ENCODE measurements at regions of chr1 and their contacts with region 1.

Region 1: GRCh38 chr1:184494929-184495328 is 108.1 kb downstream of the C1orf21 start:
- DNase-seq: no peak
- ATAC-seq: no peak
- H3K4me3 ChIP-seq: no peak overlapping the region
- H3K4me3 Mint-ChIP-seq: no peak overlapping the region
- H3K27ac ChIP-seq: no peak overlapping the region
- H3K27ac Mint-ChIP-seq: peak overlapping the region; percentile 98 to 99
- H3K4me1 ChIP-seq: peaks cover 17% of the 10 kb centered on the region
- H3K4me1 Mint-ChIP-seq: peaks cover 59 to 60% of the 10 kb centered on the region in 2 donors
- H3K27me3 ChIP-seq: no peaks in the 10 kb centered on the region
- H3K27me3 Mint-ChIP-seq: no peaks in the 10 kb centered on the region
- CTCF ChIP-seq: no peak

Region 2: DNA sequence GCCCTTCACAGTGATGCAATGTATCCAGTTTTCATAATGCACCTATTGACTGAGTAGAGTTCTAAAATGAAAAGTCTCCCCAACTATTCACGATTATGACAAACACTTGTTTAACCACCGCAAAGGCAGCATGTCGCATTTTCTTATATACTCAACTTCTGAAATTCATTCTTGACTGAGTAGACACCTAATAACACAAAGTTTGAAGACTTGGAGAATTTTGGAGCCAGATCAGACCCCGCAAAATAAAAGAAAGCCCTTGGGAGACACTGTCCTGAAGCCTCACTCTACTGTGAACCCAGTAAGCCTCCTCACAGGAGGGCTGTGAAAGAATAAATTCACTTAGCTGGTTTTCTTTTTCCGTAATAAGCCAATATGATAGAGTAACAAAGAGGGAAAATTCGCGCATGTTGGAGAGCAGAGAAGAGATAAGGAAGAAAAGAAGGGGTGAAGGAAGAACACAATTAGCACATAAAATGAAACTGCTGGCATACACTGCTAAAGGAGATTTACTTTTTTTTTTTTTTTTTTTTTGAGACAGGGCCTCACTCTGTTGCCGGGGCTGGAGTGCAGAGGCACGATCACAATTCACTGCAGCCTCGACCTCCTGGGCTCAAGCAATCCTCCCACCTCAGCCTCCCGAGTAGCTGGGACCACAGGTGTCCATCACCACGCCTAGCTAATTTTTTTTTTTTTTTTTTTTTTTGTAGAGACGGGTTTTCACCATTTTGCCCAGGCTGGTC is 456.9 kb before region 1 on chr1:
- intact Hi-C with region 1: no loop called
- DNase-seq: no peak
- ATAC-seq: no peak
- H3K4me3 ChIP-seq: peak overlapping the region; percentile 58
- H3K4me3 Mint-ChIP-seq: peak overlapping the region; percentile 87
- H3K27ac ChIP-seq: peak overlapping the region; percentile 8
- H3K27ac Mint-ChIP-seq: no peak overlapping the region
- H3K4me1 ChIP-seq: peaks cover 18% of the 10 kb centered on the region
- H3K4me1 Mint-ChIP-seq: peaks cover 22 to 35% of the 10 kb centered on the region in 2 donors
- H3K27me3 ChIP-seq: peaks cover 11% of the 10 kb centered on the region
- H3K27me3 Mint-ChIP-seq: peaks cover 37 to 47% of the 10 kb centered on the region in 2 donors
- CTCF ChIP-seq: no peak

Region 3: DNA sequence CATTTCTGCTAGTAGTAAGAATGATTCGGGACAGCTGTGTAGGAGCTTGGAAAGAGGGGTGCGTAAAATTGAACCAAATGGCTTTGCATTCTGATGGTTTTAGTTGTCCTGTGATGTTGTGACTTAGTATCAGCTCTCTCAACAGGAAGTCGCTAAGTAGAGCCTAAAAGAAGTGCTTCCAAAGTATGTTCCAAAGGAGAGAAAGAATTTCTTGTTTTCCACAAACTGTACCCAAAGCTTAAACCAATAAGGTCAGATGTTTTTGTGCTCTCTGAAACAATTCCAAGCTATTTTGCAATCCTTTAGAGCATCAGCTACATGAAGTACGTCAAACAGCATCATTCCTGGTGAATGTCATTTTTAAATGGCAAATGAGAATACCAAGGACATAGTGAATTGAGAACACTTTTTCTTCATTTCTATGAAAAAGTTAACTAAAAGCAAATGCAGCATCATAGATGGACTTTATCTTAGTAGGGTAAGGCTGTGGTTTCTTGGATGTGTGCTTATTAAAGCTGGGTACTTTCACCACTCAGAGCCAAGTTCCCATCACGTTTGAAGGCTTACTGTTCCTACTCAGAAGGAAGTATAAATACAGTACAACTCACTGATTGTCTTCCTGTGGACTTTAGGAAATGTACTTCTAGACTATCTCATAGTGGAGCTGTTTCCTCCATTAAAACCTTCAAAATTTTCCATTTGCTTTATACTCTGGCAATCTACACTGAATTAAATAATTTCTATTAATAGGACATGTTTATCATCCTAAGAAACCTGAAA is 40.5 kb after region 1 on chr1:
- intact Hi-C with region 1: loop called (anchors 5 kb)
- DNase-seq: no peak
- ATAC-seq: no peak
- H3K4me3 ChIP-seq: no peak overlapping the region
- H3K4me3 Mint-ChIP-seq: no peak overlapping the region
- H3K27ac ChIP-seq: no peak overlapping the region
- H3K27ac Mint-ChIP-seq: peak overlapping the region; percentile 2 to 72
- H3K4me1 ChIP-seq: peaks cover 3% of the 10 kb centered on the region
- H3K4me1 Mint-ChIP-seq: peaks cover 71 to 79% of the 10 kb centered on the region in 2 donors
- H3K27me3 ChIP-seq: no peaks in the 10 kb centered on the region
- H3K27me3 Mint-ChIP-seq: no peaks in the 10 kb centered on the region
- CTCF ChIP-seq: no peak

Region 4: GRCh38 chr1:184555665-184556641 is 61.0 kb after region 1 on chr1:
- intact Hi-C with region 1: no loop called
- DNase-seq: no peak
- ATAC-seq: no peak
- H3K4me3 ChIP-seq: no peak overlapping the region
- H3K4me3 Mint-ChIP-seq: no peak overlapping the region
- H3K27ac ChIP-seq: no peak overlapping the region
- H3K27ac Mint-ChIP-seq: peak overlapping the region in 1 of 2 donors; percentile 7
- H3K4me1 ChIP-seq: peaks cover 3% of the 10 kb centered on the region
- H3K4me1 Mint-ChIP-seq: peaks cover 80% of the 10 kb centered on the region in 2 donors
- H3K27me3 ChIP-seq: no peaks in the 10 kb centered on the region
- H3K27me3 Mint-ChIP-seq: no peaks in the 10 kb centered on the region
- CTCF ChIP-seq: no peak

Region 5: DNA sequence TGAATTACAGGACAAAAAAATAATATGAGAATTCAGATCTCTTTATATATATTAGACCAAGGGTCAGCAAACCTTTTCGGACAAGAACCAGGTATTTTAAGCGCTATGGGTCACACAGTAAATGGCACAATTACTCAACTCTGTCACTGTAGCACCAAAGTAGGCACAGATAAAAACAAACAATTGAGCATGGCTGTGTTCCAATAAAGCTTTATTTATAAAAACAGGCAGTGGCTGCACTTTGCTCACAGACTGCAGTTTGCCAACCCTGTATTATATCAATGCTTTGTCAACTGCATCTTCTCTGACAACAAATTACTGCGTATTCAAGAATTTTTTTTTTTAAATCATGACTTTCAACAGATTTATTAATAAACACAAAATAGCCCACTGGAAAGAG is 229.9 kb after region 1 on chr1:
- intact Hi-C with region 1: no loop called
- DNase-seq: no peak
- ATAC-seq: no peak
- H3K4me3 ChIP-seq: no peak overlapping the region
- H3K4me3 Mint-ChIP-seq: no peak overlapping the region
- H3K27ac ChIP-seq: no peak overlapping the region
- H3K27ac Mint-ChIP-seq: no peak overlapping the region
- H3K4me1 ChIP-seq: no peaks in the 10 kb centered on the region
- H3K4me1 Mint-ChIP-seq: no peaks in the 10 kb centered on the region
- H3K27me3 ChIP-seq: no peaks in the 10 kb centered on the region
- H3K27me3 Mint-ChIP-seq: no peaks in the 10 kb centered on the region
- CTCF ChIP-seq: no peak

Measured in natural killer cell (primary cell).